ENCODE measurements at regions of chr17 and their contacts with region 1.

Region 1: GRCh38 chr17:10894220-10894619 is 56.3 kb upstream of the PIRT start:
- DNase-seq: no peak
- ATAC-seq: no peak
- H3K4me3 ChIP-seq: no peak overlapping the region
- H3K27ac ChIP-seq: no peak overlapping the region
- H3K4me1 ChIP-seq: no peaks in the 10 kb centered on the region
- H3K27me3 ChIP-seq: peaks cover 0 to 10% (median 0%) of the 10 kb centered on the region in 7 donors
- CTCF ChIP-seq: no peak

Region 2: DNA sequence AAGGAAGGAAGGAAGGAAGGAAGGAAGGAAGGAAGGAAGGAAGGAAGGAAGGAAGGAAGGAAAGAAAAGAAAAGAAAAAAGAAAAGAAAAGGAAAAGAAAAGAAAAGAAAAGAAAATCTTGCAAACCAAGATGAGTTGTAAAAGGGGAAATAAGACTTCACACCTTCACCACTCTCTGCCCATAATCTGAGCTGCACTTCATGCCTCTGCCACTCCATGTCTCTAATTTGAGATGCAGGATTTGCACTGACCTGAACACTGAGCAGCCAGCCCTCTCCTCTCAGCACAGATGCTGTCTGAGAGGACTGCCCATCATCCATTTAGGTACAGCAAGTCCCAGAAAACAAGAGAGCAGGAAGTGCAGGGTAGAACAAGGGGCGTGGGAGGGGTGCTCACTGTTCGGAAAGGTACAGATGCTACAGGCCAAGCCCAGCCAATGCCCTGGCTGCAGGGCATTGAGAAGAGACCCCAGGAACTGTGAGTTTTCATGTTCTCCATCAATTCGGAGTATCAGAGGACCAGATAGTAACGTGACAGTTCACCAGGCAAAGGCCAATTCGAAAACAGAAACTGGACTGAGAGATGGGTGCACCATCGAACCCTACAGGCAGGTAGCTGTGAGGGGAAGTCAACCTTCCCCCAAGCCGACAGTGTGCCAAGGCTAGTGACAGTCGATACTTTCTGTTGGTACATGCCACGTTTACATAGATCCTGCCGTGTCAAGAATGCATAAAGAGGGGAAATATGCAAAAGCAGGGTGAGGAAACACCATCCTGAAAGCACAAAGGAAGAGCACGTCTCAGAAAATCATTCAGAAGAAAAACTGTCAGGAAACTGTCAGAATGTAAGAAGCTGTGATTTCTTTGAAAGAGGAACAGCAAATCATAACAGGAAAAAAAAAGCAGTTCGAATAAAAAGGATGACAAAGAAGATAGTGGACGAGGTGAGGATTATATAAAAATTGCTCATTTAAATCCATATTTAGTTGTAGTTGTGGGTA is 847.1 kb before region 1 on chr17:
- intact Hi-C with region 1: loop called in 1 of 10 experiments (anchors 5 kb)
- DNase-seq: no peak
- ATAC-seq: no peak
- H3K4me3 ChIP-seq: no peak overlapping the region
- H3K27ac ChIP-seq: peak overlapping the region in 4 of 10 donors; percentile 4 to 33 (median 22)
- H3K4me1 ChIP-seq: peaks cover 0 to 61% (median 21%) of the 10 kb centered on the region in 9 donors
- H3K27me3 ChIP-seq: no peaks in the 10 kb centered on the region
- CTCF ChIP-seq: no peak

Region 3: GRCh38 chr17:10843811-10844210 is 50.4 kb before region 1 on chr17:
- intact Hi-C with region 1: no loop called
- DNase-seq: peak in 1 of 2 donors; percentile 24
- ATAC-seq: peak in 3 of 8 donors; percentile 28 to 38 (median 32)
- H3K4me3 ChIP-seq: no peak overlapping the region
- H3K27ac ChIP-seq: no peak overlapping the region
- H3K4me1 ChIP-seq: peaks cover 0 to 14% (median 9%) of the 10 kb centered on the region in 9 donors
- H3K27me3 ChIP-seq: peaks cover 0 to 30% (median 9%) of the 10 kb centered on the region in 7 donors
- CTCF ChIP-seq: no peak

Region 4: GRCh38 chr17:10875979-10876555 is 18.2 kb before region 1 on chr17:
- intact Hi-C with region 1: no loop called
- DNase-seq: peak; percentile 21 to 32
- ATAC-seq: peak in 1 of 8 donors; percentile 50
- H3K4me3 ChIP-seq: no peak overlapping the region
- H3K27ac ChIP-seq: no peak overlapping the region
- H3K4me1 ChIP-seq: no peaks in the 10 kb centered on the region
- H3K27me3 ChIP-seq: peaks cover 0 to 38% (median 18%) of the 10 kb centered on the region in 7 donors
- CTCF ChIP-seq: peak; percentile 31 to 76 (median 66)